H1 (cell line): ENCODE measurements at regions of chr7 and their contacts with region 1.

Region 1: DNA sequence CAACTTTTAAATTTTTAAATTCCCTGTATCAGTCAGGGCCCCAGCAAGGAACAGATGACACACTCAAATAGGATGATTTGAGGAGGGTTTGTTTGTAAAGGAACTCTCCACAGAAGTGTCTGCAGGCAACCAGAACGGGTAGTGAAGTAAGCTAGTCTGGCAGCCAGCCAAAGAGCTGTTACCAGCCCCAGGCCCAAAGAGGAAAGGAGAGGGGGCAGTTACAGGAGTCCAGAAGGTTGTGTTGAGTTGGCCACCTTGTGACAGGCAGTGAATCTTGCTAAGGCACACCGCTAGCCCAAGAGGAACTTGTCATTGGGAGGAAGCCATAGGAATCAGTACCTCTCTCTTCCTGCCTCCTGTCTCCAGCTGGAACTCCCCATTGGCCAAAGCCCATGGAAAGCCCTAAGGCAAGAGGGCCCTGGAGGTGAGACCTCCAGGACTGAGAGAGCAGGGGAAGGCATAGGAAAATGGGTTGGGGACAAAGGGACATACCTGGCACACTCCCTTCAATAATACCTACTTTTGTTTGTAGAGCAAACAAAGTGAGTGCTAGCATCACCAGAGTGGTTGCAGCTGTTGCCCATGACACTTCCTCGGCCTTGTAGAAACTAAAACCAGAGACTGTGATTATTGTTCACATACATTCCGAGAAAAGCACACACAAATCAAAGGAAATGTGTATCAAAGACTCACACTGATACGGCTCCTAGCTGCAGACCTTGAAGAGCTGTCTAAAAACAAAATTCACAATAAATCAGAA is 25.4 kb upstream of the GATAD1 start:
- DNase-seq: no peak
- H3K4me3 ChIP-seq: no peak overlapping the region
- H3K27ac ChIP-seq: no peak overlapping the region
- H3K4me1 ChIP-seq: peaks cover 0 to 3% (median 0%) of the 10 kb centered on the region in 4 experiments; a peak in 3 of 7 replicates
- H3K27me3 ChIP-seq: peaks cover 0 to 2% (median 0%) of the 10 kb centered on the region in 4 experiments; a peak in 2 of 7 replicates
- CTCF ChIP-seq: no peak
- EP300 ChIP-seq: no peak
- POLR2A ChIP-seq: no peak
- RAD21 ChIP-seq: no peak

Region 2: DNA sequence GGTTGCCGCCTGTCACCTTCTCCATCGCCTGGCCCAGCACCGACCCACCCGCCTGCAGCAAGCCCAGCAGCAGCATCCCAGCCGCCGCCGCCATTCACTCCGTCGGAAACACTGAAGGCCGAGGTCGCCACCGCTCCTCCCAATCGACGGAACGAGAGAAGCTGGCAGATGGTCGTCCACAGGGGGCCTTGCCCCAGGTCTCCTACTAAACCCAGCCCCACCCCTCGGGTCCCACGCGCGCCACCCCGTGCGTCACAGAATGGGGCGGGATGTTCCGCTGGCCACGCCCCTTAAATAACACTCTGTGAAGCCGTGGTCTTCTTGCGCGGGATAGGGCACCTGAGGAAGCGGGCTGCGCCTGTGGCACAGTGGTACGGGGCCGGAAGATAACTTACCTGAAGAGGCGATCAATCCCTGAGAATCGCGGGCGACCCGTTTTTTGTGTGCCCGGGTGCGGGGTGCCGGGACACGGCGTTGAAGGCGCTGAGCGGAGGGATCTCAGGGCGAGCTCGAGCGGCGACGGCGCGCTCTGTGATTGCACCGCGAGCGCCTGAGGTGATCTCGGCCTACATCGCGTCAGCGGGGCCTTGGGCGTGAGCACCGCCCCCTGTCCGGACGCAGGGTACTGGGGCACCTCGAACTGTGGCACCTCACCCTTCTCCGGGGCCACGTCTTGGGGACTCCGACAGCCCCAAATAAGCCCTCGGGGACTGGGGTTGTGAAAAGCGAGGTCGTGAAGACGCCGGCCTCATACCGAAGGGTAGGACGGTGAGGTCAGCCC is 287.4 kb before region 1 on chr7 and contains the start of gene CYP51A1:
- CTCF ChIA-PET with region 1: interaction called, 14 read pairs
- POLR2A ChIA-PET with region 1: interaction called, 6 read pairs
- DNase-seq: peak; percentile 60 to 97
- H3K4me3 ChIP-seq: peak within 1 kb of the TSS; percentile 74 to 97 (median 89)
- H3K27ac ChIP-seq: peak within 1 kb of the TSS; percentile 94
- H3K4me1 ChIP-seq: peaks cover 0 to 6% (median 0%) of the 10 kb centered on the region in 4 experiments; a peak in 4 of 7 replicates
- H3K27me3 ChIP-seq: no peaks in the 10 kb centered on the region
- CTCF ChIP-seq: peak in 2 of 3 experiments; percentile 13 to 22; a peak in 2 of 4 replicates
- EP300 ChIP-seq: peak in 1 of 2 experiments; percentile 34; a peak in 1 of 3 replicates
- POLR2A ChIP-seq: peak; percentile 85 to 94
- RAD21 ChIP-seq: no peak
- total RNA-seq, gene CYP51A1: 109 and 111 TPM in 2 replicates

Region 3: DNA sequence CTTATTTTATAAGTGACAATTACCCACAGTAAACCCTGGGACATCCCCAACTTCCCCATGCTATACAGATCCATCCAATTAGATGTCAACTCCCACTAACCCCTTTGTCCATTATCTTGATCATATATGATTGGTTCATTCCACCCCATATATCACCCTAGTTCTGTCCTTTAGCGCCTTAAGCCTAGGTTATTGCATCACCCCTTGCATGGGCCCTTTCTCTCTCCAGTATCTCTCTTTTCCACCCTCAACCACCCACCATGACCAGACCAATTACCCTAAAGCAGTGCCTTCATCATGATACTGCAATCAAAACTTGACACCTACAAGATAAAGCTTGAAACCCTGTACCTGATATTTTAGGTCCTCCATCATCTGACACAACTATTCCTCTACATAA is 12.5 kb before region 1 on chr7:
- CTCF ChIA-PET with region 1: interaction called, 64 read pairs
- POLR2A ChIA-PET with region 1: interaction called, 7 read pairs
- DNase-seq: no peak
- H3K4me3 ChIP-seq: no peak overlapping the region
- H3K27ac ChIP-seq: no peak overlapping the region
- H3K4me1 ChIP-seq: no peaks in the 10 kb centered on the region
- H3K27me3 ChIP-seq: no peaks in the 10 kb centered on the region
- CTCF ChIP-seq: no peak
- EP300 ChIP-seq: no peak
- POLR2A ChIP-seq: no peak
- RAD21 ChIP-seq: no peak

Region 4: DNA sequence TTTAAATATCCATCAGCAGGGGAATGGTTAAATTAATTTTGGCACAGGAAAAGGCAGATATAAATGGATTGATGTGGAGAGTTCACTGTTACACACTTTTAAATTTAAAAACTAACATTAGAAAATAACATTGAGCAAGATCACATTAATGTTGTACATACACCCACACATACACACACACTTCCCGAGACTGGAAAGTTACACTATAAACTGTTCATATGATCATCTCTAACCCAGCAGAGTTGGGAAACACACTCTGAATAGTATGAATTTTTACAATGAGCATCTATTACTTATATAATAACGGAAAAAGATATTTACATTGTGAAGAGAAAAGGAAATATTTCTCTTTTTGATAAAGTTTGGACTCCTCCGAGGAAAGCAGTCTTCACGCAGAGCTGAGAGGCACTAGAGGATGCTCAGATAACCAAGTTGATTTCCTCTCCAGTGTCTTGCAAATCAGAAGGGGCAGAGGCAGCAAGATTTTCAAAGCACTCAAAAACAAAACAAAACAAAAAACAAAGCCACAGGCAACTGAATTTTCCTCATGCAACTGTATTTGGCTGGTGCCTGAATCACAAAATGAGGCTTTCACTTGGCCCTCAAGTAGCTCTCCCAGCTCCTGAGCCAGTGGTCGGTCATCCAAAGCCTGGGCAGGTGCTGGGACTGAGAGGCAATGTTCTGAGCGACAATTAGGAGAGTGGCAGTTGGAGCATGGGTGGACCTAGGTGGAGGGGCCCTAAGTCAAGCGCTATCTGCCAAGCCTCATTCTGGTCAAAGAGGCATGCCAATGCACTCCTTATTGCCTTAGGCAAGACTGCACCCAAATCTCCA is 15.0 kb after region 1 on chr7:
- CTCF ChIA-PET with region 1: interaction called, 15 read pairs
- POLR2A ChIA-PET with region 1: interaction called, 3 read pairs
- DNase-seq: no peak
- H3K4me3 ChIP-seq: no peak overlapping the region; a peak in 1 of 8 replicates
- H3K27ac ChIP-seq: no peak overlapping the region
- H3K4me1 ChIP-seq: peaks cover 0 to 11% (median 5%) of the 10 kb centered on the region in 4 experiments; a peak in 4 of 7 replicates
- H3K27me3 ChIP-seq: no peaks in the 10 kb centered on the region
- CTCF ChIP-seq: no peak
- EP300 ChIP-seq: no peak
- POLR2A ChIP-seq: no peak
- RAD21 ChIP-seq: no peak

Region 5: GRCh38 chr7:92461027-92462003 is 39.5 kb after region 1 on chr7:
- CTCF ChIA-PET with region 1: interaction called, 10 read pairs
- POLR2A ChIA-PET with region 1: no interaction called
- DNase-seq: no peak
- H3K4me3 ChIP-seq: no peak overlapping the region
- H3K27ac ChIP-seq: no peak overlapping the region
- H3K4me1 ChIP-seq: no peaks in the 10 kb centered on the region
- H3K27me3 ChIP-seq: no peaks in the 10 kb centered on the region
- CTCF ChIP-seq: peak; percentile 54 to 72 (median 64)
- EP300 ChIP-seq: no peak
- POLR2A ChIP-seq: no peak
- RAD21 ChIP-seq: peak; percentile 68 to 70

Region 6: GRCh38 chr7:92534572-92534971 is 112.7 kb after region 1 on chr7:
- CTCF ChIA-PET with region 1: no interaction called
- POLR2A ChIA-PET with region 1: no interaction called
- DNase-seq: no peak
- H3K4me3 ChIP-seq: no peak overlapping the region; a peak in 1 of 8 replicates
- H3K27ac ChIP-seq: no peak overlapping the region
- H3K4me1 ChIP-seq: no peaks in the 10 kb centered on the region
- H3K27me3 ChIP-seq: no peaks in the 10 kb centered on the region
- CTCF ChIP-seq: no peak
- EP300 ChIP-seq: no peak
- POLR2A ChIP-seq: no peak
- RAD21 ChIP-seq: no peak